IMR-90 (cell line): ENCODE measurements at regions of chr9 and their contacts with region 1.

Region 1: DNA sequence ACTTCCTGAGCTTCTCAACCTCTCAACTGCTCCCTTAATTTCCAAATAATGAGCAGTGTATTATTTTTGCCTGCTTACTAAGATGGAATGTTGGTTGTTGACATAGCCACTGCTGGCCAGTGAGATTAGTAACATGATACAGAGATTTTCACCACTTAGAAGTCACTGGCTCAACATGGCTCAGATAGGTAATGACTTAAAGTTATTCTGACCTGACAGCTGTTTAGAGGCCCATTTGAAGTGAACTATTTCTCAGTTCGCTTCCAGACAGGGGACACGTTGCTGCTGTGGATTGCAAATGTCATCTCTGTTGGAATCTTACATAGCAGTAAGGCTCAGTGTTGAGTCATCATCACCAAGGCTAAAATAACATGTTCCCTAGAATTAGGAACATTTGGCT is 490.2 kb downstream of the TLE4 start:
- DNase-seq: peak; percentile 97
- ATAC-seq: peak; percentile 93
- H3K4me3 ChIP-seq: no peak overlapping the region
- H3K27ac ChIP-seq: no peak overlapping the region
- H3K4me1 ChIP-seq: peaks cover 3% of the 10 kb centered on the region; the same call in 1 of the 2 replicates
- H3K27me3 ChIP-seq: no peaks in the 10 kb centered on the region
- CTCF ChIP-seq: no peak
- POLR2A ChIP-seq: no peak
- RAD21 ChIP-seq: no peak

Region 2: GRCh38 chr9:79764381-79764780 is 297.6 kb before region 1 on chr9:
- CTCF ChIA-PET with region 1: no interaction called
- POLR2A ChIA-PET with region 1: no interaction called
- dilution Hi-C with region 1: no loop called
- in situ Hi-C with region 1: no loop called
- intact Hi-C with region 1: loop called (anchors 2 kb)
- DNase-seq: peak; percentile 98
- ATAC-seq: peak; percentile 88
- H3K4me3 ChIP-seq: no peak overlapping the region
- H3K27ac ChIP-seq: peak overlapping the region; percentile 35; the same call in 1 of the 2 replicates
- H3K4me1 ChIP-seq: peaks cover 11% of the 10 kb centered on the region
- H3K27me3 ChIP-seq: no peaks in the 10 kb centered on the region
- CTCF ChIP-seq: no peak
- POLR2A ChIP-seq: no peak
- RAD21 ChIP-seq: no peak; the same call in 1 of the 2 replicates